ENCODE measurements at regions of chr7 and their contacts with region 1.

Region 1: DNA sequence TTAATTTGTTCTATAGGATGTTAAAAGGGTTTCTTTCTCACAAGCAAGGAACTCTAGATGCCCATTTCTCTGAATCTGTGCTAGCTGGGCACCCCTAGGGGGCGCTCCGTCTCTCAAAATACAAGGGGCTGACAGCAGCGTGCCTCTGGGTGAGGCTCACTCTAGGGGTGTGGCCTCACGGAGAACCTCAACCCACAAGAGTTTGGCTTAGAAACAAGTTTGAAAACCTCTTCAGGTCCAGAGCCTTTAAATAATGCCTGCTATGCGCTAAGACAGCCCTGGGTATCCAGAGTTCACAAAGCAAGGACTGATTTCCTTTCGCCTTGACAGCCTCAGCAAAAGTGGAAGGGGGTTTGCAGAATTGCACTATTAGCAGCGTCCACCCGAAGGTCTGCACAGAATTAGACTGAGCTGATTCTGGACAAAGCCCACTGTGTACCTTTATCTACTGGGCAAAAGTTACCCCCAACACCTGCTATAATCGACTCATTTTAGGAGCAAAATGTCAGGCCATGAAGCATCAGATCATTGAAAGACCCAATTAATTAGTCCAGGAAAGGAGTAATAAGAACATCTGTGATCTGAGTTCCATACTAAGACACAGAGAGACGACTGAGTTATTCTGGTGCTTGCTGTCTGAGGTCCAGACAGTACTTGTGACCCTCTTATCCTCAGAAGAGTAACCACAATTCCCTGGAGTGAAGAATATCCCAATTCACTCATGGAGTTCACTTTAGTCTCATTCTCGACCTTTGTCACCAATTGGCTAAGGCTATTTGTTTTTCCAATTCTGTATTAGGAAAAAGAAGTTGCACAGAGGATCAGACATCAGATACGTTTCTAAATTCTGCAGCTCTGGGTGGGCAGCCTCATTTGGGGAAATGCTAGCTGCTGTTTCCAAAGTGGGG is 574 bp upstream of the CPED1 start:
- DNase-seq: peak; percentile 90 to 94 (median 93)
- ATAC-seq: peak; percentile 73 to 85 (median 80)
- H3K4me3 ChIP-seq: peak overlapping the region; percentile 46 to 62 (median 57)
- H3K27ac ChIP-seq: peak overlapping the region; percentile 96 to 100 (median 98)
- H3K4me1 ChIP-seq: peaks cover 0 to 10% (median 0%) of the 10 kb centered on the region in 4 donors
- H3K27me3 ChIP-seq: no peaks in the 10 kb centered on the region
- CTCF ChIP-seq: peak; percentile 91 to 97 (median 96)
- POLR2A ChIP-seq: no peak

Region 2: DNA sequence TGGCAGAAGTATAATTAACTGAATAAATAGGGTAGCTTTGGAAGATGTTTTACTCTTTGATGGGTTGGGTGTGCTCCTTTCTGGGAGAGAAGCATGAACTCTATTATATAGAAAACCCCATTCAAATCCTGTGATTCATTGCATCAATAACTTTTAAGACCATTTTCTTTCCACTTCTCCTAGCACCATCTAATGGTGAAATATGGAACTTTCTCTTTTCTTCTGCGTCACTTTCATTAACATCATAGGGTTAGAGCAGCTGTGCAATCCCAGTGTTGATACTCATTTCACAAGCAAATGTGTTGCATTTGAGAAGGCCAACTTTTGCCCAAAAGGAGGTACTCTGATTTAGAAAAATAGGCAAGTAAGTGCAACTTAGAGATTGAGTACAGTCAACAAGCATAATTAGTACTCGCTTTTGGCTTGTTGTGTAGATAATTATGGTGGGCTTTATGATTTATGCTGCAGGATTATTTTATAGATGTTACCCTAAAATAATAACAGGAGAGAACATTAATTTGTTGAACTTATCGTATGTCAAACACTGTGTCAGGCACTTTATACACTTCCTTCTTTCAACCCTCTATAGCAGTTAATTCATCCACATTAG is 93.5 kb after region 1 on chr7:
- intact Hi-C with region 1: loop called (anchors 5 to 10 kb)
- DNase-seq: no peak
- ATAC-seq: peak; percentile 77 to 85 (median 80)
- H3K4me3 ChIP-seq: no peak overlapping the region
- H3K27ac ChIP-seq: peak overlapping the region in 2 of 3 donors; percentile 32 to 74
- H3K4me1 ChIP-seq: peaks cover 0 to 30% (median 1%) of the 10 kb centered on the region in 4 donors
- H3K27me3 ChIP-seq: no peaks in the 10 kb centered on the region
- CTCF ChIP-seq: peak; percentile 71 to 77 (median 75)
- POLR2A ChIP-seq: no peak

Measured in right lobe of liver (tissue), 6 donors.